OCI-LY7 (cell line): ENCODE measurements at regions of chr10 and their contacts with region 1.

Region 1: GRCh38 chr10:89251409-89252224 is at the start of gene LIPA:
- DNase-seq: peak; percentile 97
- H3K4me3 ChIP-seq: peak within 1 kb of the TSS; percentile 81
- H3K27ac ChIP-seq: no peak within 1 kb of the TSS
- H3K4me1 ChIP-seq: peaks cover 7% of the 10 kb centered on the region
- CTCF ChIP-seq: no peak
- total RNA-seq, gene LIPA: 8.9 and 11.7 TPM in 2 replicates

Region 2: DNA sequence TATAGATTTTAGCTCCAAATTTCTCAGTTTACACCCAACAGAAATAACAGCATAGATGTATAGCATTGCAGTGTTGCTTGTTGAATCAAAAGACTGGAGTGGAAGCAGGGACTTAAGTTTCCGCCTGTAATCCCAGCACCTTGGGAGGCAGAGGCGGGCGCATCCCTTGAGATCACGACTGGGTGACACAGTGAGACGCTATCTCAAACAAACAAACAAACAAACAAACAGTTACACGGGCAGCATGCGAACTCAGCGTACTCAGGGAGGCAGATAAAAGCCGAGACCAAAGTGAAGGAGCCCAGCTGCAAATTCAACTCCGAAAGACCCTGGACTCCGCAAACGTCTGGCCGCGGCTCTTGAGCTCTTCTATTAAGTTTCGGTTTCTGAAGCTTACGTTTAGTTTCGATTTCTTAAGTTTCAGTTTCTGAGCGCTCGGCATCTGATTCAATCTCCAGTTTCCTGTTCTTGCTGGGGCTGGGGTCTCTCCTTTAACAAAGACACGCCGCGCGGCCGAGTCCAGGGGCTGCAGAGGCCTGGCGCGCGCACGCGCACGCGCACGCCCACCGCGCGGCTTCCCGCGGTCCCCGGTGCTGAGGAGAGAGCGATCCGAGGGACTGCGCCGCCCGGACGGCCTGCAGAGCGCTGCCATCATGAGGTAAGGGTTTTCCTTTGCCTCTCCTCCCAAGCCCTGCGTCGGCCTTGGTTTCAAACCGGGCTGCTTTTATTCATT is 162.7 kb after region 1 on chr10 and contains the start of gene IFIT5:
- CTCF ChIA-PET with region 1: no interaction called
- POLR2A ChIA-PET with region 1: interaction called, 4 read pairs
- intact Hi-C with region 1: loop called (anchors 5 kb)
- DNase-seq: peak; percentile 80
- H3K4me3 ChIP-seq: peak within 1 kb of the TSS; percentile 74
- H3K27ac ChIP-seq: no peak within 1 kb of the TSS
- H3K4me1 ChIP-seq: peaks cover 3% of the 10 kb centered on the region
- CTCF ChIP-seq: no peak
- total RNA-seq, gene IFIT5: 0.57 and 0.77 TPM in 2 replicates

Region 3: GRCh38 chr10:89701238-89702120 is 449.9 kb after region 1 on chr10 and contains the start of gene KIF20B:
- CTCF ChIA-PET with region 1: no interaction called
- POLR2A ChIA-PET with region 1: interaction called, 3 read pairs
- intact Hi-C with region 1: loop called (anchors 2 kb)
- DNase-seq: peak; percentile 97
- H3K4me3 ChIP-seq: peak within 1 kb of the TSS; percentile 92
- H3K27ac ChIP-seq: peak within 1 kb of the TSS; percentile 74
- H3K4me1 ChIP-seq: peaks cover 45% of the 10 kb centered on the region
- CTCF ChIP-seq: 0 out of 2 replicates have a peak, but pooled peaks have one; percentile 30
- total RNA-seq, gene KIF20B: 25.0 and 30.2 TPM in 2 replicates

Region 4: GRCh38 chr10:90496591-90496990 is 1245.0 kb after region 1 on chr10:
- CTCF ChIA-PET with region 1: no interaction called
- POLR2A ChIA-PET with region 1: no interaction called
- intact Hi-C with region 1: no loop called
- DNase-seq: no peak
- H3K4me3 ChIP-seq: no peak overlapping the region
- H3K27ac ChIP-seq: no peak overlapping the region
- H3K4me1 ChIP-seq: no peaks in the 10 kb centered on the region
- CTCF ChIP-seq: no peak

Region 5: GRCh38 chr10:90958781-90959180 is 1707.2 kb after region 1 on chr10:
- CTCF ChIA-PET with region 1: no interaction called
- POLR2A ChIA-PET with region 1: no interaction called
- intact Hi-C with region 1: no loop called
- DNase-seq: no peak
- H3K4me3 ChIP-seq: no peak overlapping the region
- H3K27ac ChIP-seq: no peak overlapping the region
- H3K4me1 ChIP-seq: no peaks in the 10 kb centered on the region
- CTCF ChIP-seq: no peak